Ovary (tissue), 10 donors: ENCODE measurements at regions of chr3 and their contacts with region 1.

Region 1: GRCh38 chr3:5026331-5027218 is 47.3 kb downstream of the BHLHE40 start:
- DNase-seq: peak; percentile 86 to 96 (median 89)
- H3K4me3 ChIP-seq: peak overlapping the region; percentile 47
- H3K27ac ChIP-seq: peak overlapping the region; percentile 26 to 75
- H3K4me1 ChIP-seq: peaks cover 4% of the 10 kb centered on the region
- H3K27me3 ChIP-seq: no peaks in the 10 kb centered on the region
- CTCF ChIP-seq: peak; percentile 34 to 82 (median 81)
- EP300 ChIP-seq: no peak
- POLR2A ChIP-seq: peak; percentile 5

Region 2: GRCh38 chr3:4712143-4712542 is 314.4 kb before region 1 on chr3:
- intact Hi-C with region 1: loop called in 2 of 4 experiments (anchors 5 kb)
- DNase-seq: peak in 1 of 5 donors; percentile 57
- H3K4me3 ChIP-seq: no peak overlapping the region
- H3K27ac ChIP-seq: no peak overlapping the region
- H3K4me1 ChIP-seq: no peaks in the 10 kb centered on the region
- H3K27me3 ChIP-seq: no peaks in the 10 kb centered on the region
- CTCF ChIP-seq: no peak
- EP300 ChIP-seq: no peak
- POLR2A ChIP-seq: no peak

Region 3: GRCh38 chr3:4722103-4722502 is 304.5 kb before region 1 on chr3:
- intact Hi-C with region 1: loop called in 1 of 4 experiments (anchors 5 kb)
- DNase-seq: peak in 2 of 5 donors; percentile 53 to 66
- H3K4me3 ChIP-seq: no peak overlapping the region
- H3K27ac ChIP-seq: peak overlapping the region; percentile 46 to 73
- H3K4me1 ChIP-seq: peaks cover 11% of the 10 kb centered on the region
- H3K27me3 ChIP-seq: no peaks in the 10 kb centered on the region
- CTCF ChIP-seq: peak in 2 of 3 donors; percentile 31 to 41
- EP300 ChIP-seq: no peak
- POLR2A ChIP-seq: no peak

Region 4: GRCh38 chr3:5136211-5136918 is 109.8 kb after region 1 on chr3:
- intact Hi-C with region 1: no loop called
- DNase-seq: no peak
- H3K4me3 ChIP-seq: no peak overlapping the region
- H3K27ac ChIP-seq: no peak overlapping the region
- H3K4me1 ChIP-seq: peaks cover 5% of the 10 kb centered on the region
- H3K27me3 ChIP-seq: no peaks in the 10 kb centered on the region
- CTCF ChIP-seq: no peak
- EP300 ChIP-seq: no peak
- POLR2A ChIP-seq: no peak